B cell (primary cell): ENCODE measurements at regions of chr3 and their contacts with region 1.

Region 1: DNA sequence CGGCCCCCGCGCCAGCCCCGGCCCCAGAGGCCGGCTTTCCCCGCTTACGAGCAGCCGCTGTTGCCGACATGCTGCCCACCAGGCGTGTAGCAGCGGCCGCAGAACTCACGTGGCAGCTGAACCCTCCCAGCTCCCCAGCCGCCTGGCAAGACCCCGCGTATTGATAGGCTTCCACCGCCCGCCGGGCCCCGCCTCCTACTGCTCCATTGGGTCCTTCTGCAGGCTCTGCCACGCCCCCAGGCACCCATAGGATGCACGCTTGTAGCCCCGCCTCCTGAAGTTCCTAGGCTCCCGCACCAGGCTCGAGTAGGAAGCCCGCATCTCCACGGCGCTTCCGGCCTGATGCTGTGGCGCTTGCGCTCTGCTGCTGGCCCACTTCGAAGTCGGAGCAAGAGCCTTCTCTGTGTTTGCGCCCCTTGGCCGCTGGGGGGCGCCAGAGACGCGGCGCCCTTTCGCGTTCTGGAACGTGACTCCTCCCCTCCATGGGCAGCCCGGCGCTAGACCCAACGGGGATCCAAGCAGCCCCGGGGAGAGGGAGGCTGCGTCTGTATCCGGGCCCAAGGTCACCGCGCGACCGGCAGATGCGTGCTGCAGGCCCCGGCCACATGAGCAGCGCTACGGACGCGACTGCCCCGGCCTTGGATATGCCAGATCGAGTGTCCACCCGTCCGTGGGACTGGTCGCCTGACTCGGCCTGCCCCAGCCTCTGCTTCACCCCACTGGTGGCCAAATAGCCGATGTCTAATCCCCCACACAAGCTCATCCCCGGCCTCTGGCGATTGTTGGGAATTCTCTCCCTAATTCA is at the starts of genes PARP3 and RRP9:
- DNase-seq: peak; percentile 100
- ATAC-seq: peak; percentile 94
- H3K4me3 ChIP-seq: peak within 1 kb of the TSS; percentile 43 to 90 (median 88)
- H3K4me3 Mint-ChIP-seq: peak within 1 kb of the TSS; percentile 95
- H3K27ac ChIP-seq: peak within 1 kb of the TSS; percentile 72 to 74
- H3K27ac Mint-ChIP-seq: peak within 1 kb of the TSS; percentile 94
- H3K4me1 ChIP-seq: peaks cover 22 to 26% of the 10 kb centered on the region in 2 donors
- H3K4me1 Mint-ChIP-seq: peaks cover 36% of the 10 kb centered on the region
- H3K27me3 ChIP-seq: no peaks in the 10 kb centered on the region
- H3K27me3 Mint-ChIP-seq: no peaks in the 10 kb centered on the region
- CTCF ChIP-seq: peak; percentile 100
- total RNA-seq, gene PARP3: 17.3 and 17.7 TPM in 2 replicates
- total RNA-seq, gene RRP9: 16.7 and 16.9 TPM in 2 replicates

Region 2: GRCh38 chr3:51682079-51682478 is 259.9 kb before region 1 on chr3:
- CTCF ChIA-PET with region 1: no interaction called
- POLR2A ChIA-PET with region 1: no interaction called
- intact Hi-C with region 1: loop called (anchors 5 kb)
- DNase-seq: peak; percentile 89
- ATAC-seq: peak; percentile 83
- H3K4me3 ChIP-seq: no peak overlapping the region
- H3K4me3 Mint-ChIP-seq: peak overlapping the region; percentile 5
- H3K27ac ChIP-seq: peak overlapping the region; percentile 33 to 69
- H3K27ac Mint-ChIP-seq: peak overlapping the region; percentile 54
- H3K4me1 ChIP-seq: peaks cover 63 to 87% of the 10 kb centered on the region in 2 donors
- H3K4me1 Mint-ChIP-seq: peaks cover 78% of the 10 kb centered on the region
- H3K27me3 ChIP-seq: no peaks in the 10 kb centered on the region
- H3K27me3 Mint-ChIP-seq: no peaks in the 10 kb centered on the region
- CTCF ChIP-seq: peak; percentile 90

Region 3: DNA sequence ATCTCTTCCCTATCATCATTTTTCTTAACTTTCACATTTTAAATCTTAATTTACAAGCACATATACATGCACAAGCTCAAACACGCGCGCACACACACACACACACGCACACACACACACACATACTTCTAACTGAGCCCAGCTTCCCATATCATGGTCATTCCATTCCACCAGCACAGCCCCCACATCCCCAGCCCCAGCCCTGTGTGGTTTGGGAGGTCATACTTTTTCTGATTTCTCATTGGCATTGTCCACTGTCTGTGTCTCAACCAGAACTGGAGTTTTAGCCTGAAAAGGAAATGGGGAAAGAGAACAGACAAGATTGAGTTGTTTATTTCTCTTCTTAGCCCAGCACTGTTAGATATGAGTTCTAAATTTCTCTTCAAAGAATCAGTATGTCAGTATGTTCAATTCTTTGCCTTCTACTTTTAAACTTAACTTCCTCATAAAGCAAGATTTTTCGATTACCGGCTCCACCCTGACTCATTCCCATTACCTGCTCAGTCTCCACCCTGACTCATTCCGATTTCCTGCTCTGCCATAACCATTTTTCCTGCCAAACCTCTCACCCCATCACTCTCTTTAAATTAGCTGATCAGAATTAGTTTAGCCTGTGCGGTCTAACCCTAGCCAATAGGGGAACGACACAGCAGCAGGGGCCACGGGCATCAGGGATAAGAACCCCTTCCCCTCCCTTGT is 45.2 kb before region 1 on chr3:
- CTCF ChIA-PET with region 1: no interaction called
- POLR2A ChIA-PET with region 1: no interaction called
- intact Hi-C with region 1: no loop called
- DNase-seq: no peak
- ATAC-seq: no peak
- H3K4me3 ChIP-seq: no peak overlapping the region
- H3K4me3 Mint-ChIP-seq: no peak overlapping the region
- H3K27ac ChIP-seq: no peak overlapping the region
- H3K27ac Mint-ChIP-seq: no peak overlapping the region
- H3K4me1 ChIP-seq: no peaks in the 10 kb centered on the region
- H3K4me1 Mint-ChIP-seq: no peaks in the 10 kb centered on the region
- H3K27me3 ChIP-seq: peaks cover 0 to 9% (median 4%) of the 10 kb centered on the region in 4 experiments
- H3K27me3 Mint-ChIP-seq: peaks cover 66% of the 10 kb centered on the region
- CTCF ChIP-seq: no peak

Region 4: GRCh38 chr3:51974963-51975851 is 33.2 kb after region 1 on chr3 and contains the start of gene ABHD14A:
- CTCF ChIA-PET with region 1: interaction called, 45 read pairs
- POLR2A ChIA-PET with region 1: interaction called, 13 read pairs
- intact Hi-C with region 1: loop called (anchors 1 kb)
- DNase-seq: peak; percentile 85
- ATAC-seq: peak; percentile 78
- H3K4me3 ChIP-seq: peak within 1 kb of the TSS; percentile 71 to 98 (median 85)
- H3K4me3 Mint-ChIP-seq: peak within 1 kb of the TSS; percentile 100
- H3K27ac ChIP-seq: peak within 1 kb of the TSS; percentile 39 to 75
- H3K27ac Mint-ChIP-seq: peak within 1 kb of the TSS; percentile 95
- H3K4me1 ChIP-seq: peaks cover 14 to 23% of the 10 kb centered on the region in 2 donors
- H3K4me1 Mint-ChIP-seq: peaks cover 28% of the 10 kb centered on the region
- H3K27me3 ChIP-seq: no peaks in the 10 kb centered on the region
- H3K27me3 Mint-ChIP-seq: no peaks in the 10 kb centered on the region
- CTCF ChIP-seq: no peak
- total RNA-seq, gene ABHD14A: 11.9 and 14.0 TPM in 2 replicates

Region 5: DNA sequence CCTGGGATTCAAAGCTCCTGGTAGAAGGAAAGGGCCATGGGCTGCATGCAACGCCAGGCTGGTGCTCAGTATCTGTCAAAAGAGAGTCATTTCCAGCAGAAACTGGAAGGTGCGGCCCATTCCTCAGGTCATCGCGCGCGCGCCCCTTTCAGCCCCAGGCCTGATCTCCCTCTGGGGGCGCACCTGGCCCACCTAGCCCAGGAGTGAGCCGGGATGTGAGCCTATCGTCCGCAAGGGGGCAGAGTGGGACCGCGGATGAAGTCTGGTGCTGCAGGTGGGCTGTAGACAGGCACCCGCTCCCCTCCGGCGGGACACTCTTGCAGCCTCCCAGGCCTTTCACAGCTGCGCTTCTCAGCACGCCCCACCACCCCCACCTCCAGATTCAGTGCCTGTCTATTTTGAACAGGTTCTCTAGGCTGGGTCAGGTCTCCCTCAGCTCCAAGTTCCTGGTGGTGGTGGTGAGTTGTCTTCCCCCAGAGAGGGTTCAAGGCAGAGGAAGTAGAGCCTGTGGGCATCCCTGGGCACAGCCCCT is 59.5 kb after region 1 on chr3:
- CTCF ChIA-PET with region 1: interaction called, 9 read pairs
- POLR2A ChIA-PET with region 1: no interaction called
- intact Hi-C with region 1: loop called (anchors 1 kb)
- DNase-seq: peak; percentile 91
- ATAC-seq: peak; percentile 99
- H3K4me3 ChIP-seq: no peak overlapping the region
- H3K4me3 Mint-ChIP-seq: no peak overlapping the region
- H3K27ac ChIP-seq: no peak overlapping the region
- H3K27ac Mint-ChIP-seq: peak overlapping the region; percentile 37
- H3K4me1 ChIP-seq: peaks cover 6 to 13% of the 10 kb centered on the region in 2 donors
- H3K4me1 Mint-ChIP-seq: peaks cover 5% of the 10 kb centered on the region
- H3K27me3 ChIP-seq: no peaks in the 10 kb centered on the region
- H3K27me3 Mint-ChIP-seq: peaks cover 6% of the 10 kb centered on the region
- CTCF ChIP-seq: peak; percentile 90

Region 6: DNA sequence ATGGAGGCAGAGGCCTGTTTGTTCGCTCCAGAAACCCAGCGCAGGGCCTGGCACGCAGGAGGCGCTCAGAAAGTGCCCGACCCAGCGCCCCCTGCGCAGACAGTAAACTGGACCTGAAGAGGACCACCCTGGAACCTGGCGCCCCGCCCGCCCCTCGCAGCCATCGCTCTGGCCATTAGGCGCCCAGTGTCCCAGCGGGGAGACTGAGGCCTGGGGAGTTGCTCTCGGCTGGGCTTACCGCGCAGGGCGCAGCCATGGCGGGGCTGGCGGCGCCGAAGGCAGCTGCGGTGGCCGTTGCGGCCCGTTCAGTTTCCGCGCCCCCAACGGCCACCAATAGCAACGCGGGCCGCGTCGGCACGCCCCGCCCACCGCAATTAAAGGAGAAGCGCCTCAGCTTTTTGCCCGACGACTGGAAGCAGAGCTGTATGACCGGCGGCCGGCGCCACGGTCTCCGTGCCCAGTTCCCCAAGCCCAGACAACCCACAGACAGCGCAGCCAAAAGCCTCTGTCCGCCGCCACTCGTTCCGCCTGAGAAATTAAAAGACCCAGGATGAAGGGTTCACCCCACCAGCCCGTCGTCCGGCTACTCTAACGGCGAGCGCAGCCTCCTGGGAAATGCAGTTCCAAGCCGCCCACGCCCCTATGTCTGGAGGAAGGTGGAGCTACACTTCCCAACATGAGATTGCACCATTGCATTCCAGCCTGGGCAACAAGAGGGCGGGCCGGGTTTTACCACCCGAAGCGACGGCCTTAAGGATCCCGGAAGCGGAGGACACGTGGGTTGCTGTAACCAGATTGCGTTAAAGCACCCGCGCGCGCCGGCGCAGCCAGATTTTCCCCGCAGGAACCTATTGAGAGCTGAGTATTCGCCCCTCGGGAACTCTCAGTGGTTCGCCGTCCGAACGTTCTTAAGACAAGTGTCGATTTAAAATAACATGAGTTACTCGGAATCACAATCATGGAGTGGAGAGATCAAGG is 212.4 kb after region 1 on chr3 and contains the start of gene POC1A:
- CTCF ChIA-PET with region 1: no interaction called
- POLR2A ChIA-PET with region 1: no interaction called
- intact Hi-C with region 1: loop called (anchors 1 kb)
- DNase-seq: peak; percentile 91
- ATAC-seq: peak; percentile 85
- H3K4me3 ChIP-seq: peak within 1 kb of the TSS; percentile 73 to 93 (median 92)
- H3K4me3 Mint-ChIP-seq: peak within 1 kb of the TSS; percentile 98
- H3K27ac ChIP-seq: peak within 1 kb of the TSS; percentile 79 to 81
- H3K27ac Mint-ChIP-seq: peak within 1 kb of the TSS; percentile 98
- H3K4me1 ChIP-seq: peaks cover 4 to 15% of the 10 kb centered on the region in 2 donors
- H3K4me1 Mint-ChIP-seq: peaks cover 14% of the 10 kb centered on the region
- H3K27me3 ChIP-seq: no peaks in the 10 kb centered on the region
- H3K27me3 Mint-ChIP-seq: no peaks in the 10 kb centered on the region
- CTCF ChIP-seq: peak; percentile 13
- total RNA-seq, gene POC1A: 2.4 and 2.8 TPM in 2 replicates